G401 (cell line): ENCODE measurements at regions of chr16 and their contacts with region 1.

Region 1: GRCh38 chr16:22217889-22218730 is 12.0 kb downstream of the EEF2K start:
- DNase-seq: no peak

Region 2: GRCh38 chr16:22077700-22078313 is 140.3 kb before region 1 on chr16:
- in situ Hi-C with region 1: no loop called
- DNase-seq: peak; percentile 61

Region 3: GRCh38 chr16:22250522-22250921 is 32.4 kb after region 1 on chr16:
- in situ Hi-C with region 1: no loop called
- DNase-seq: peak; percentile 16

Region 4: DNA sequence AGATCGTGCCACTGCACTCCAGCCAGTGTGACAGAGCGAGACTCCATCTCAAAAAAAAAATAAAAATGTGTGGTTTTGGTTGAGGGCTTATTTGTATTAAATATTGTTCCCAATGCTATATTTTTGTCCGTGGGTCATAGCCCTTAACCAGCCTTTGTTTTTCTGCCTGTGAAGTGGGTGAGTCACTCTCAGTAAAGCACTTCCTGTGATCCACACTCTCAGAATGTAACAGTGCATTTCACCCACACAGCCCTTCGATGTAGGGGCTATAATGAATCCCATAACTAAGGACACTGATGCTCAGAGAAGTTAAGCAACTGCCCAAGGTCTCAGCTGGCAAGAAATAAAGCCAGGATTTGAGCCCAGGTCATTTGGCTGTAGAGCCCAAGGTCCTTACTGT is 44.4 kb after region 1 on chr16:
- in situ Hi-C with region 1: loop called (anchors 5 kb)
- DNase-seq: no peak